ENCODE measurements at regions of chr20 and their contacts with region 1.

Region 1: GRCh38 chr20:33262658-33263065 is 20.4 kb upstream of the BPIFB1 start:
- DNase-seq: peak; percentile 18
- ATAC-seq: peak; percentile 96
- H3K4me3 ChIP-seq: no peak overlapping the region
- H3K27ac ChIP-seq: no peak overlapping the region
- H3K4me1 ChIP-seq: no peaks in the 10 kb centered on the region
- H3K27me3 ChIP-seq: peaks cover 12% of the 10 kb centered on the region
- CTCF ChIP-seq: peak; percentile 88

Region 2: GRCh38 chr20:33148040-33148439 is 114.6 kb before region 1 on chr20:
- CTCF ChIA-PET with region 1: no interaction called
- POLR2A ChIA-PET with region 1: no interaction called
- in situ Hi-C with region 1: no loop called
- intact Hi-C with region 1: no loop called
- DNase-seq: no peak
- ATAC-seq: no peak
- H3K4me3 ChIP-seq: no peak overlapping the region
- H3K27ac ChIP-seq: no peak overlapping the region
- H3K4me1 ChIP-seq: no peaks in the 10 kb centered on the region
- H3K27me3 ChIP-seq: peaks cover 24% of the 10 kb centered on the region
- CTCF ChIP-seq: no peak

Region 3: DNA sequence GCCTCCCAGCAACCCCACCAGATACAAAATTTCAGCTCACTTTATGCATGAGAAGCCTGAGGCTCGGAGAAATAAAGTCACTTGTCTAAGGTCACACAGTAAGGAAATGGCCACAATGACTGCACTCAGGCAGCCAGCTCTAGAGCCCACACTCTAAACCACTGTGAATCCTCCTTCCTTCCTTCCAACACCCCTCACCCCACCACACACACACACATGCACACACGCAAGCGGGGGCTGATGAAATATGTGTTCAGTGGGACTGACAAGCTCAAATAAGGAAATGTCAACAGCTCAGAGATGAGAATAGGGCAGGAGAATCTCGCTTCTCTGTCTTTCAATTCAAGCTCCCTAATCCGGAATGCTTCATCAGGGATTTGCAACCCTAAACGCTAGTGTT is 32.8 kb before region 1 on chr20:
- CTCF ChIA-PET with region 1: no interaction called
- POLR2A ChIA-PET with region 1: no interaction called
- in situ Hi-C with region 1: no loop called
- intact Hi-C with region 1: no loop called
- DNase-seq: no peak
- ATAC-seq: no peak
- H3K4me3 ChIP-seq: no peak overlapping the region
- H3K27ac ChIP-seq: no peak overlapping the region
- H3K4me1 ChIP-seq: no peaks in the 10 kb centered on the region
- H3K27me3 ChIP-seq: peaks cover 19% of the 10 kb centered on the region; the same call in 1 of the 2 replicates
- CTCF ChIP-seq: no peak

Region 4: DNA sequence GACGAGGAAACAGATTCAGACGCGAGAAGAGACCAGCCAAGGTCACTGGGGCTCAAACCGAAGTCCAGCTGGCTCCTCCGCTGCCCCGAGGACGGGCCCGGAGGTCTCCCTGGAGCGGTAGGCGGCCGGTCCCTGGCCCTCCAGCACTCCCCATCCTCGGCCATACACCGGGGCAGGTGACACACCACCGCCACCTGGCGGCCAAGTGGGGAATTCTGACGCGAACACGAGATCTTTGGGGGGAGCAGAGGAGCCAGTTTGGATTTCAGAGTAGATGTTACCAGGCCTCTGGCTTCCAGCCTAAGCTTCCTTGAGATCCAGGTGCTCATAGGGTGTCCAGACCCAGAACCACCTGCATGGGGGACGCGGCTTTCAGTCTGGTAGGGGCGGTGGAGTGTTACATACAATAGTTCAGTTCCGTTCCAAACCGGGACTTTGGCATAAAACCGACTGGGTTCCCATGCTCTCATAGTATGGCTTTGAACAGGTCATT is 36.5 kb after region 1 on chr20:
- CTCF ChIA-PET with region 1: interaction called, 10 read pairs
- POLR2A ChIA-PET with region 1: no interaction called
- in situ Hi-C with region 1: no loop called
- intact Hi-C with region 1: loop called (anchors 5 kb)
- DNase-seq: peak; percentile 42
- ATAC-seq: peak; percentile 94
- H3K4me3 ChIP-seq: peak overlapping the region in 1 of 2 experiments; percentile 30; a peak in 2 of 4 replicates
- H3K27ac ChIP-seq: no peak overlapping the region
- H3K4me1 ChIP-seq: no peaks in the 10 kb centered on the region
- H3K27me3 ChIP-seq: peaks cover 11% of the 10 kb centered on the region
- CTCF ChIP-seq: peak; percentile 98

Measured in Panc1 (cell line).